BJ (cell line): ENCODE measurements at regions of chr11 and their contacts with region 1.

Region 1: DNA sequence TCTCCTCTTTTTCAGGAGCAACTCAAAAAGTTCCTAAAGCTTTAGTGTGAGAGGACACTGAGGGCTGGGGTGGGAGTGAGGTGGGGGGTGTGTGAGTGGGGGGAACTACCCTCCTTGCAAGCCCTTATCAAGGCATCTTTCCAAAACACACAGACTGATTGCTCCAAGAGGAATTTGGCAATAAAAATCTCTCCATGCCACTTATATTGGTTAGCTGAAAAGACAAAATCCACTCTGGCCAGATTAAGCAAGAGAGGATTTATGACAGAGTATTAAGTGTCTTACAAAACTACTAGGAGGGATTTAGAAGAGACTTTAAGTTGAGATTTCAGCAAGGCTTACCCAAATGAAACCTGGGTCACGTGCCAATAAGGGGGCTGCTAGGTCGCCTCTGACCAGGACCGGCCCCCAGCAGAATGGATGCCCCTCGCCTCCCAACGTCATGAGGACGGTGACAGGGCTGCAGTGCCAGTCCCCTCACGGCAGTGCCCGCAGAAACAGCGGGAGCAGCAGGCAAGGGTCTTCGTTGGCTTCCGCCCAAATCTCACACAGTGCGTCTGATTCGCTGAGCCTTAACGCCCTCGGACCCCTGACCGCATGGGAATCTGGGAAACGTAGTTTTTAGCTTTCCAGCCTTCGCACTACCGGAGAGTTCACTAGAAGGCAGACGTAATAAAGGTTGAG is 22.1 kb upstream of the CTR9 start:
- DNase-seq: peak; percentile 55
- H3K4me3 ChIP-seq: no peak overlapping the region
- H3K27me3 ChIP-seq: no peaks in the 10 kb centered on the region
- CTCF ChIP-seq: no peak

Region 2: DNA sequence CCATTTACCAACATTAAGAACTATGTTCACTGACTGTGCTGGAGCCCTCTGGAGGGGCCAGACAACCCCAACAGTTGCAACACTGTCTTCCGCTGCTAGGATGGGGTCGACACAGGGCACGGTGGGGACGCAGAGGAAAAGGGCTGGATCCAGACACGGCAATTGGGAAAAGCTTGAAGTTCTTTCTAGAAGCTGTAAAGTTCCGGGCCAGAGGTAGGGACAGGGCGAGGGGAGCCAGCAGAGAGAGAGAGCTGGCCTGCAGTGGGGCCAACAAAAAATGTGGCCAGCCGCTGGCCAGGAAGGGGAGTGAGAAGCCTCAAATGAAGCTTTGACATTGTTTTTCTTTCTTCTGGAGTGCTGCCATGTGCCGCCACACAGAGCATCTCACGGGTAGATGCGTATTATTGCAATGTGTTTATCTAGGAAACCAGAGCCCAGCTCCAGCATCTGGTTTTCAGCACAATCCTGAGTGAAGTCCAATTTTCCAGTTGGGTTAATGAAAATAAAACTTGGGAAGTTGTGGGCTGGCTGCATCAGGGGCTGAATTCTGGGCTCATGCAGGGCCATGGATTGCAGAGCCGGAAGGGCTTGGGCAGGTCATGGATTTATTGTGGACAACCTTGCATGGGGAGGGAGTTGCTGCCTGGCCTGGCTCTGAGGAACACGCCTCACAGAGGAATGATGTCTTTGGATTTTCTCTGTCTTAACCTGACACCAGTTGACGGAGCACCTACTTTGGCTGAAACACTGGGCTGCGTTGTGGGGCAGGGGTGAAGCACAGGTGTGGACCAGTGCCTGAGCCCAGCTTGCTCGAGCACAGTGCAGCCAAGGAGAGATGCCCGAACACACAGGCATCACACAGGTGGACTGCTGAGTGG is 341.5 kb before region 1 on chr11:
- CTCF ChIA-PET with region 1: interaction called, 4 read pairs
- POLR2A ChIA-PET with region 1: interaction called, 14 read pairs
- DNase-seq: peak; percentile 96
- H3K4me3 ChIP-seq: no peak overlapping the region
- H3K27me3 ChIP-seq: no peaks in the 10 kb centered on the region
- CTCF ChIP-seq: no peak

Region 3: DNA sequence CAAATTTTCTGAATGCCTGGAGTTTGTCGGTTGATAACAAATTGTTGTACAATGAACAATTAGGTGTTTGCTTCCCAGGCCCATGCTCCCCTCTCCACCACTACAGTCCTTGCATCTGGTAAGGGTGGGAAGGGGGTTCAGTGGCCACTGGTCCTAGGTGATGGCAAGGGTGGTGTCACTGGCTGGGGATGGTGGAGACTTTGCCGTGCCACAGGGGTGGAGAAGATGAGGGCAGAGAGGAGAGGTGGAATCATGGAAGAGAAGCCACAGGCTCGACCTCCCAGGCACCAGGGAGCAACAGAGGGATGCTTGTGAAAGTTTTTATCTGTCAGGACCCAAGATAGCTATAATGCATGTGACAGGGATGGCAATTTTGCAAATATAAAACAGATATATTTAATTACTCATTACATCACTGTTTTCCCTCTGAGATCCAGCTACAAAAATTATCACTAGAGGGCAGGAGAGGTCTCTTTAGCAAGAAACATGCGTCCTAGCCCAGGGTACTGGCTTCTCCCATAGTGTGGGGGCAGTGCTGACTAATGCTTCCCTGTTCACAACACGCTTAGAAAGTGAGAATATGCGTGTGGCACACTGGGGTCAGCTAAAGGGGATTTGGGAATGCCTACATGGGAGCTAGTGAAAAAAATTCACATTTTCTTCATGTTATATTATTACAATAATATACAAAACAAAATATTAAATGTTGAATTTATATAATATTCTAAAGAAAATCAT is 322.9 kb before region 1 on chr11:
- CTCF ChIA-PET with region 1: interaction called, 15 read pairs
- POLR2A ChIA-PET with region 1: no interaction called
- DNase-seq: no peak
- H3K4me3 ChIP-seq: no peak overlapping the region
- H3K27me3 ChIP-seq: no peaks in the 10 kb centered on the region
- CTCF ChIP-seq: peak; percentile 72

Region 4: GRCh38 chr11:10618490-10618889 is 110.4 kb before region 1 on chr11:
- CTCF ChIA-PET with region 1: no interaction called
- POLR2A ChIA-PET with region 1: no interaction called
- DNase-seq: no peak
- H3K4me3 ChIP-seq: no peak overlapping the region
- H3K27me3 ChIP-seq: no peaks in the 10 kb centered on the region
- CTCF ChIP-seq: no peak

Region 5: GRCh38 chr11:10653926-10654810 is 74.8 kb before region 1 on chr11:
- CTCF ChIA-PET with region 1: interaction called, 13 read pairs
- POLR2A ChIA-PET with region 1: no interaction called
- DNase-seq: no peak
- H3K4me3 ChIP-seq: no peak overlapping the region
- H3K27me3 ChIP-seq: no peaks in the 10 kb centered on the region
- CTCF ChIP-seq: peak; percentile 60

Region 6: DNA sequence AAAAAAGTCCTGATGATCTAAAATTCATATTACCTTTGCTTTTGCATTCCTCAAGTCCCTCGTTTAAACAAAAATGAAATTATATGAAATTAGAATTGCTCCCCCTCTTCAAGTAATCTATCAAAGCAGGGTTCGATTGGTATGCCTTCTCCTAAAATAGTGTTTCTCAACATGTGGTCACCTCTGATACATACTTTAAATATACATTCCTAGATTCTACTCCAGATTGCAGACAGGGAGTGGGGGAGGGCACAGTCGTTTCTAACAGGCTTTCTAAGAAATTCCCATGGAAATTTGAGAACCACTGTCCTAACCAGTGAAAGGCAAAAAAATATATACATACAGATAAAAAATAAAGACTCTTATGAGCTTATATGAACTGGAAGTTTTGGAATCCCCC is 12.8 kb before region 1 on chr11:
- CTCF ChIA-PET with region 1: interaction called, 10 read pairs
- POLR2A ChIA-PET with region 1: no interaction called
- DNase-seq: no peak
- H3K4me3 ChIP-seq: no peak overlapping the region
- H3K27me3 ChIP-seq: no peaks in the 10 kb centered on the region
- CTCF ChIP-seq: no peak

Region 7: DNA sequence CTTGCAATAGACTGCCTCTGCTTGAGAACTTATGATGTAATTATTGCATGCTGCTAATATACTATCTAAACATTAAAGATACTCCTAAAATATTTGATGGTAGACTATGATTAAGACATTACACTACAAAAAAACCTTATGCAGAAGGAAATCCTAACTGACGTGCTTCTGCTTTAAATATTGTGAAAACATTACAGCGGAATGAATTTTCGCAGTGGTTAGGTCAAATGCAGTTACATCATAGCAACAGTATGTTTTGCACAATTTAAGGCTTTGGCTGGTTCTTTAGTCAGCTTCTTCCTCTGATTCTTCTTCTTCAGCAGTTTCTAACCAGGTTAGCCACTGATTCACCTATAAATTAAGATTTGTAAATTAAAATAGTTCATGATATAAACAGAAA is 68.6 kb after region 1 on chr11:
- CTCF ChIA-PET with region 1: no interaction called
- POLR2A ChIA-PET with region 1: no interaction called
- DNase-seq: no peak
- H3K4me3 ChIP-seq: no peak overlapping the region
- H3K27me3 ChIP-seq: no peaks in the 10 kb centered on the region
- CTCF ChIP-seq: no peak

Region 8: GRCh38 chr11:11078344-11079086 is 349.6 kb after region 1 on chr11:
- CTCF ChIA-PET with region 1: no interaction called
- POLR2A ChIA-PET with region 1: no interaction called
- DNase-seq: no peak
- H3K4me3 ChIP-seq: no peak overlapping the region
- H3K27me3 ChIP-seq: peaks cover 10% of the 10 kb centered on the region; the same call in 1 of the 2 replicates
- CTCF ChIP-seq: 0 out of 2 replicates have a peak, but pooled peaks have one; percentile 7